ENCODE measurements at regions of chr22 and their contacts with region 1.

Region 1: GRCh38 chr22:25702040-25702439 is 39.9 kb upstream of the MYO18B start:
- DNase-seq: peak; percentile 37
- H3K4me3 ChIP-seq: no peak overlapping the region
- H3K27ac ChIP-seq: no peak overlapping the region
- H3K4me1 ChIP-seq: peaks cover 13% of the 10 kb centered on the region
- H3K27me3 ChIP-seq: no peaks in the 10 kb centered on the region
- CTCF ChIP-seq: peak; percentile 58

Region 2: DNA sequence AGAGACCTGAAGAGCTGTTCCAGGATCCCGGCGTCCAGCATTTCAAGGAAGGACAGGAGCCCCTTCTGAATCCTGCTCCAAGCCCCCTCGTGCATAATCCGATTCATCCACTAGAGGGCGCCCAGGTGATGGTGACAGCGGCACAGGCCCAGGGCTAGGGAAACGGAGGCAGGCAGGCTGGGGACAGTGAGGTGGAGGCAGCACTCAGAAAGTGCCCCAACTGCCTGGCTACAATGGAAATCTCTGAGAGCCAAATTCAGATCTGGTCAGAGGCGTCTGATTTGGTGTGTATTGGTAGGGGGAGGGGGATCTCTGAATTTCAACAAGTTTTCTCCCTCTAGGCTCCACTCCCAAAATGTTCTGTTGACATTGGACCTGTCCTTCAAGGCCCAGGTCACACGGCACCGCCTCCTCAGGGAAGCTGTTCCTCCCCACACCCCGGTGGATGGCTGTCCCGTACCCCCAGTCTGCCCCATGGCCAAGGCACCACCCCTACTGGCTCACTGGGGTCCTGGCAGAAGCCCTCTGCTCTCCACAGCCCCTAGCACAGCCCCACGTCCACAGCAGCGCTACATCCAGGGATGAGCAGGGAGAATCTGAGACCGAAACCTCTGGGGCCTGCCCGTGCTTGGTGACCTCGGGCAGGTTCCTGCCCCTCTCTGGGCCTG is 339.7 kb before region 1 on chr22:
- CTCF ChIA-PET with region 1: no interaction called
- POLR2A ChIA-PET with region 1: no interaction called
- intact Hi-C with region 1: loop called (anchors 10 kb)
- DNase-seq: peak; percentile 67
- H3K4me3 ChIP-seq: no peak overlapping the region
- H3K27ac ChIP-seq: no peak overlapping the region
- H3K4me1 ChIP-seq: no peaks in the 10 kb centered on the region
- H3K27me3 ChIP-seq: no peaks in the 10 kb centered on the region
- CTCF ChIP-seq: peak; percentile 96

Region 3: GRCh38 chr22:25465949-25466348 is 236.1 kb before region 1 on chr22:
- CTCF ChIA-PET with region 1: interaction called, 7 read pairs
- POLR2A ChIA-PET with region 1: no interaction called
- intact Hi-C with region 1: loop called (anchors 1 kb)
- DNase-seq: no peak
- H3K4me3 ChIP-seq: no peak overlapping the region
- H3K27ac ChIP-seq: no peak overlapping the region
- H3K4me1 ChIP-seq: no peaks in the 10 kb centered on the region
- H3K27me3 ChIP-seq: no peaks in the 10 kb centered on the region
- CTCF ChIP-seq: no peak

Region 4: DNA sequence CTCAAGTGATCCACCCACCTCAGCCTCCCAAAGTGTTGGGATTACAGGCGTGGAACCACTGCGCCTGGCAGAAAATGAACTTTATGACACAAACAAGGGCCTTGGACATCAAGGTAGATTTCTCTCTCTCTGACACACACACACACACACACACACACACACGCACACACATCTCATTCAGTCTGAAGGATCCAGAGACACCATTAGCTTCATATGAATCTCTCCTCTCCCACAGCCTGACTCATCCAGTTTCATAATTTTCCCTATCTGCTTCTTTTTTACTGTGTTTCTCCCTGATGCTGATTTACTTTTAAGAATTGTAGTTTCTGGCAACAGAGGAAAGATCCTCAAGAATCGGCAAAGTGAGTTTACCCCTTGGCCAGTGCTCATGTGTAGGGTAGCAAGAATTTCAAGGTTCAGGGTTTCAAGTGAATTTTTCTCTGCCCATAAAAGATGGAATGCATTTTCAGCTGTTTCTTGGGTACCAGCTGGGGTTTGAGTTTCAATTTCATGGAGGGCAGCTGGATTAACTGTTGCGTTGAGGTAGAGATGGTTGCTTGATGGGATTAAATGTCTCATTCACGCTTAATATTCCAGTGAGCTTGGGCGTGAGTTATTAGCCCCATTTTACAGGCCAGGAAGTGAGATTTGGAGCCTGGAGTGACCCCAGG is 43.4 kb after region 1 on chr22:
- CTCF ChIA-PET with region 1: no interaction called
- POLR2A ChIA-PET with region 1: no interaction called
- intact Hi-C with region 1: no loop called
- DNase-seq: no peak
- H3K4me3 ChIP-seq: no peak overlapping the region
- H3K27ac ChIP-seq: no peak overlapping the region
- H3K4me1 ChIP-seq: no peaks in the 10 kb centered on the region
- H3K27me3 ChIP-seq: no peaks in the 10 kb centered on the region
- CTCF ChIP-seq: no peak